ENCODE measurements at regions of chr3 and their contacts with region 1.

Region 1: DNA sequence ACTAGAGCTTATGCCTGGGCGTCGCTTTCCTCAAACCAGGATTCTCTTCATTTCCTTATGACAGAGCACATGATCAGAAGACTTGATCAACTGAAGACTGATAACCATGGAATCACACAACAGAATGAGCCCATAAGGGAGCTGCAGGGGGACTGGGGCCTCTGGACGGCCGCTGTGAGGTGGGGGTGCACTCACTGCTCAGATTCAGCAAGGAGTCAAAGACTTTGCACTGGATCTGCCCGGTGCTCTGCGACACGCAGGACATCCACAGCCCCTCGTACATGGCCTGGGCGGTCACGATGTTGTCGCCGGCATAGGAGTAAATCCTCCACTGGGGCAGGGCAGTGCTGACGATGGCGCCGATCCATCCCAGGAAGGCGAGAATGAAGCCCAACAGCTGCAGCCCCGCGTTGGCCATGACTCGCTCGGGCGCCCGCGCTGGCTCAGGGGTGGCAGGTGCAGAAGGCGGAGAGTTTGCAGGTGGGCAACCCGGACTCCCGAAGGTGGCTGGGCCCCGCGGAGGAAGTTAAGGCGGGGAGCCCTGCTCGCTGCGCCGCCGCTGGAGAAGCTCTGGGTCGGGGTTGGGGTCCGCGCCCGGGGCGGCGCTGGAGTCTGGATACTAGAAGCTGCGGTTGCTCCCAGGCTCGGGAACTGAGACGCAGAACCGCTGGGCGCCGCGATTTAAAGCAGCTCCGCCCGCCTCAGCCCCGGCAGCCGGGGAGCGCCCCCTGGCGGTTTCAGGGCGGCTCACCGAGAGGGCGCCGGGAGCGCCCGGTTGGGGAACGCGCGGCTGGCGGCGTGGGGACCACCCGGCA is at the start of gene CLDN1:
- DNase-seq: no peak
- H3K4me3 ChIP-seq: peak within 1 kb of the TSS; percentile 64
- CTCF ChIP-seq: peak; percentile 95

Region 2: GRCh38 chr3:190217081-190217480 is 104.9 kb before region 1 on chr3:
- CTCF ChIA-PET with region 1: interaction called, 201 read pairs
- POLR2A ChIA-PET with region 1: no interaction called
- DNase-seq: no peak
- H3K4me3 ChIP-seq: no peak overlapping the region
- CTCF ChIP-seq: no peak

Region 3: DNA sequence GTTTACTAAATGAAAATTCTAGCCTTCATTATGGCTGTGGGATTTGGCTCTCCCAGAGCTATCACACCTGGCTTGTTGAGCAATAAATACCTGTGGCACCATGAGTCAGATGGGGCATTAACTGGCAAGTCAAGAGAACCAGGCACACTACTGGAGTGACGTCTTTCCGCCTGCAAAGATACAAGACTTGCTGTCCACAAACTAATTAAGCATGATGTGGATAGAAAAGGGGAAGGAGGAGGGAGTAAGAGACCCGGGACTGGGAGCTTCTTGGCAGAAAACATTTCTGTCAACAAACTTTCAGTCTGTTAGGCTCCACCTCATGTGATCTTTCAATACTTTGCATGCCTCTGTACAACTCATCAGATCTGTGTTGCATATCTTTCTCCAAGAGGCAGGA is 56.2 kb before region 1 on chr3:
- CTCF ChIA-PET with region 1: interaction called, 16 read pairs
- POLR2A ChIA-PET with region 1: no interaction called
- DNase-seq: peak; percentile 61
- H3K4me3 ChIP-seq: no peak overlapping the region
- CTCF ChIP-seq: no peak

Region 4: DNA sequence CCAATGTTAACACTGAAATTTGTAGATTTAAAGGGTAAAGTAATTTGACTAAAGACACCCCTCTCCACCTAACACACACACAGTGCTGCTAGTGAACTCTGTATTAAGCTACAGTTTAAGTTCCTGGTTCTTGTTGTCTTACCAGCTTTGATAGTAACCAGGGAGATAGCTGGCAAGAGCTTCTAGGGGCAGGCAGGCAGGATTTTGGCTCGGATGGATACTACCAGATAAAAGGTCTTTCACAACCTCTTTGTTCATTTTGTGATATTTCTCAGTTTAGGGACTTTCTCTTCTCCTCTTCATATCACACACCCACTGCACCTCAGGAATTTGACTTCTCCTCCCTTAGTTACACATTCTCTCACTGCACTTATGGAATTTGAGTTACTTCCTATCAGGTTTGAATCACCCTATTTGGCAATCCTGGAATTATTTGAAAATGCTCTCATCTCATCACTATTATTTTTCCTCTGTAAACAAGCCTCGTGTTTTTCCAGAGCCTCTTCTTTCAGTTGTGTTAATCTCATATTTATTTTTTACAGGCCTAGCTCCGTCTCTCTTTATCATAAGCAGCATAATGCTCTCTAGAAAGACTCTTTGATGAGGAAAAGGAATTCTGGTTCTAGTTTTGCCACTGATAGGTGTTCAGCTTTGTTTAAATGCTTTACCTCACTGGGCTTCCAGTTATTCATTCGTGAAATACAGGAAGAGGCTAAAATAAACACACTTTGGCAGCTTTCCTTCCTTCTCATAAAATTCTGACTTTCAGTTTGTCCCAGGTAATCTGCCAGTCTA is 23.2 kb after region 1 on chr3:
- CTCF ChIA-PET with region 1: interaction called, 107 read pairs
- POLR2A ChIA-PET with region 1: no interaction called
- DNase-seq: peak; percentile 91
- H3K4me3 ChIP-seq: no peak overlapping the region
- CTCF ChIP-seq: no peak

Region 5: GRCh38 chr3:190414297-190414696 is 92.3 kb after region 1 on chr3:
- CTCF ChIA-PET with region 1: interaction called, 10 read pairs
- POLR2A ChIA-PET with region 1: no interaction called
- DNase-seq: no peak
- H3K4me3 ChIP-seq: no peak overlapping the region
- CTCF ChIP-seq: no peak